HEK293 (cell line): ENCODE measurements at regions of chr19 and their contacts with region 1.

Region 1: DNA sequence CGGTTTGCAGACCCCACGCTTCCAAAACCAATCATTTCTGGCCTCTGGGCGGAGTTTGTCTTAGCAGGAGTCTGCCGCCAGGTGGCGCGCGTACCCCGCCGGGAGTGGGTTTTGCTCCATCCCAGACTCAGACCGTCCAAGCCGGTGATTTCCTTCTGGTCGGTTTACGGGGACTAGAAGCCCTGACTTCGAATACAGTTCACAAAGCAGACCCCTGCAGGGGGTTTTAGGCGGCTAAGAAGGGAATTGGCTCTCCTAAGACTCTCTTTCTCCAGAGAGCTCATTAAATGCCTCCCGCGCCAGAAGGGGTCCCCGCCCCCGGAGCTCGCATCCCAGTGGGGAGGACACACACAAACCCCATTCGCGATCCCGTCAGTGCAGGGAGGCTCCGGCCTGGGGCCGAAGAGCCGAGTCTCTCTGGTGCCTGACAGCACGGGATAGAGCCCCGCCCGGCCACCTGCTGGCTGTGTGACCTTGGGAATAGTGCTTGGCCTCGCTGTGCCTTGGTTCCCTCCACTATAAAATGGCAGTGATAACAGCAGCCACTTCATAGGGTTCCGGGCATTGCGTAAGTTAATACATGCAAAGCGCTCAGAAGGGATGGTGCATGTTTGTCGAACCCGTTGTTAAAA is 8.6 kb upstream of the NUP62 start:
- H3K4me3 ChIP-seq: peak overlapping the region; percentile 29
- H3K27ac ChIP-seq: no peak overlapping the region
- H3K4me1 ChIP-seq: peaks cover 3% of the 10 kb centered on the region; the same call in 1 of the 2 replicates
- CTCF ChIP-seq: peak; percentile 88

Region 2: GRCh38 chr19:49896863-49897621 is 40.8 kb before region 1 on chr19 and contains the start of gene IL4I1:
- CTCF ChIA-PET with region 1: no interaction called
- POLR2A ChIA-PET with region 1: no interaction called
- H3K4me3 ChIP-seq: no peak within 1 kb of the TSS
- H3K27ac ChIP-seq: no peak within 1 kb of the TSS
- H3K4me1 ChIP-seq: no peaks in the 10 kb centered on the region
- CTCF ChIP-seq: no peak

Region 3: GRCh38 chr19:49954079-49954829 is 16.4 kb after region 1 on chr19:
- CTCF ChIA-PET with region 1: interaction called, 100 read pairs
- POLR2A ChIA-PET with region 1: no interaction called
- H3K4me3 ChIP-seq: no peak overlapping the region
- H3K27ac ChIP-seq: no peak overlapping the region
- H3K4me1 ChIP-seq: 0 out of 2 replicates have a peak, but pooled peaks cover 4% of the 10 kb centered on the region
- CTCF ChIP-seq: no peak

Region 4: DNA sequence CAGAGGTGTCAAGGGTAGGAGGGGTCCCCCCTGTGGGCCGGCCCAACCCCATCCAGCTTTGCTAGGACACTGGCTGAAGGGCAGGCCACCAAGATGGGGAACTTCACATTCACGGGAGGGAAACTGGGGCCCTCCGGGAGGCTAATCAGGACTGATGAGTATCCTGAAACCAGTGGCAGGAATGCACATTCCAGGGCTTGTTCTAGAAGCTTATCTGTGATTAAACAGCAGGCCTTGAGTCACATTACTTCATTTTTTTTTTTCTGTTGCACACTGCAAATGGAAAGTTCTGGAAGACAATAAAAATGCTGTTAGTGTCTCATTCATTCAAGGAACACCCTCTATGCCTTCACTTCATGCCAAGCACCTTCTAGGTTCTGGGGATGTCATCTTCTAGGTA is 38.6 kb after region 1 on chr19:
- CTCF ChIA-PET with region 1: interaction called, 99 read pairs
- POLR2A ChIA-PET with region 1: no interaction called
- H3K4me3 ChIP-seq: no peak overlapping the region
- H3K27ac ChIP-seq: no peak overlapping the region
- H3K4me1 ChIP-seq: no peaks in the 10 kb centered on the region
- CTCF ChIP-seq: no peak

Region 5: GRCh38 chr19:49983645-49984229 is 45.9 kb after region 1 on chr19:
- CTCF ChIA-PET with region 1: interaction called, 99 read pairs
- POLR2A ChIA-PET with region 1: no interaction called
- H3K4me3 ChIP-seq: no peak overlapping the region
- H3K27ac ChIP-seq: no peak overlapping the region
- H3K4me1 ChIP-seq: no peaks in the 10 kb centered on the region
- CTCF ChIP-seq: peak; percentile 77